ENCODE measurements at regions of chr3 and their contacts with region 1.

Region 1: GRCh38 chr3:9362731-9363530 is at the start of gene THUMPD3:
- DNase-seq: peak; percentile 90
- H3K4me3 Mint-ChIP-seq: peak within 1 kb of the TSS; percentile 96
- H3K27ac Mint-ChIP-seq: peak within 1 kb of the TSS; percentile 98
- H3K4me1 Mint-ChIP-seq: peaks cover 6% of the 10 kb centered on the region
- H3K27me3 Mint-ChIP-seq: peaks cover 2% of the 10 kb centered on the region
- total RNA-seq, gene THUMPD3: 61.4 and 62.4 TPM in 2 replicates

Region 2: DNA sequence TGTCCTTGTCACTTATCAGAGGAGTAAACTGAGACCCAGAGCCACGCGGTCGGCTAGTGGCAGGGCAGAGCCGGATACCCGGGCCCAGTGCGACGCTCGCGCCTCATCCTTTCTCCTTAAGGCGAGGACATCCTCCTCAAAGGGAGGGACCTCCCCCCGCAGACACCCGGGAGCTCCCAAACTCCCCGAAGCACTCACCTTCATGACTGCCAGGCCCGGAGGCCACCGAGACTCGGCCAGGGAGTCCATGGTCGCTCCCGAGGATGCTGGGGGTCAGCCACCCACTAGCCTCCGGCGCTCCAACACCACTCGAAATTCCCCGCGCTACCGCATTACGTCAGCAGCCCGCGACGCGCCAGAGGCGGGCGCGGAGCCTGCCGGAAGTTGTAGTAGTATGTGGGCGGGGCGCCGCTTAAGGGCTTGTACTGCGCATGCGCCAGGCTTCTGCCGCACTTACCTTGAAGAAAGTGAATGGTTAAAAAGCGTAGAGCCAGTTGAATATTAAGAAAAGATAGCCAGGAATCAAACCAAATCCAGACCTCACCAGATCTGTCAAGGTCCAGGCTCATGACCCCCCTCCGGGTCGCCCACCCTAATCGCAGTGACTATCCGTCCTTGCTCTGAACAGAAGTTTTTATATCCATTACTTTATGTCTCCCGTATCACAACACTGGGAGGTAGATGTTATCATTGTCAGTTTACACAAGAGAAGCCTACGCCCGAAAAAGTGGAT is 399.6 kb before region 1 on chr3 and contains the start of gene RAD18:
- intact Hi-C with region 1: loop called (anchors 1 kb)
- DNase-seq: peak; percentile 91
- H3K4me3 Mint-ChIP-seq: peak within 1 kb of the TSS; percentile 98
- H3K27ac Mint-ChIP-seq: peak within 1 kb of the TSS; percentile 97
- H3K4me1 Mint-ChIP-seq: peaks cover 62% of the 10 kb centered on the region
- H3K27me3 Mint-ChIP-seq: peaks cover 7% of the 10 kb centered on the region
- total RNA-seq, gene RAD18: 52.8 and 54.2 TPM in 2 replicates

Region 3: DNA sequence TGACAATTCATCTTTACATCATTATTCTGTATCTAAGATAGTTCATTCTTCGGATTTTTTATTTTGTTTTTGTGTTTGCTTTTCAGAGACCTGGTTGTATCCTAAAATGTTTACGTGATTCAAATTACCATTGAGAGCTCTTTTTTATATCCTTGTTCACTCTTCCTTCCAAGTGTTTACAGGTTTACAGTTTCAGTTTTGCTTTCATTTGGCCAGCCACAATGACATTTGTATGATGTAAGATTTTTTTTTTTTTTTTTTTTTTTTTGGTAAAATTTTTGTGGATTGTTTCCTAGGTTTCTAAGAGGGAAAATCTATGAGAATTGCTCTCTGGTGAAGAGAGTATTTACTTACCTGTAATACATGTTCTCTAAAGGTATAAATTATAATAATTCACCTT is 89.5 kb after region 1 on chr3:
- intact Hi-C with region 1: loop called (anchors 2 kb)
- DNase-seq: no peak
- H3K4me3 Mint-ChIP-seq: peak overlapping the region; percentile 69
- H3K27ac Mint-ChIP-seq: peak overlapping the region; percentile 93
- H3K4me1 Mint-ChIP-seq: peaks cover 47% of the 10 kb centered on the region
- H3K27me3 Mint-ChIP-seq: no peaks in the 10 kb centered on the region